ENCODE measurements at regions of chr2 and their contacts with region 1.

Region 1: GRCh38 chr2:148989882-148990493 is 48.5 kb upstream of the LYPD6B start:
- DNase-seq: peak; percentile 72
- H3K4me3 Mint-ChIP-seq: no peak overlapping the region
- H3K27ac Mint-ChIP-seq: no peak overlapping the region
- H3K4me1 Mint-ChIP-seq: peaks cover 3% of the 10 kb centered on the region
- H3K27me3 Mint-ChIP-seq: no peaks in the 10 kb centered on the region

Region 2: DNA sequence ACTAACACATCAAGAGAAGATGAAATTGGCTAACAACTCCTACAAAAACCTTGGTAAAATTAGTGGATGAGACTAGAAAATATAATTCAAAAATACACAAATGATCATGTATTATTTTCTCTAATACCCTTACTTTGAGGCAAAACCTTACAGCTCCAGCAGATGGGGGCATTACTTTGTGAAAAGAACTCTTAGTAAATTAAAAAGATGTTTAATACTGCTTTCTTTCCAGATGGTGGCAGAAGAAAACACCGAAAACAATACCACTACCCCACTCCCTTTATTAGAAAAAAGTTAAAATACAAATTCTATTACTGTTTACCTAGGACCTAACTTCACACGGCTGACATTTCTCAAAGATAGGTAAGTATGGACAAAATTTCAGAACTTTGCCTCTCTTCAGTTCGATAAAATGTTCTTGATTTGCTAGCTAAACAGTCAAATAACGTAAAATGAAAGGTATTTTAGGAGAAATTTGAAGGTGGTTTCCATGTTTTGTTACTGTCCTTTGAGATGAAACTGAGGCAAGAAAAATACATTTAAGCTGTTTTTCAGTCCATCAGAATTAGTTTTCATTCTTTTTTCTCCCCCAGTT is 1000.1 kb before region 1 on chr2:
- CTCF ChIA-PET with region 1: interaction called, 11 read pairs
- DNase-seq: peak; percentile 43
- H3K4me3 Mint-ChIP-seq: no peak overlapping the region
- H3K27ac Mint-ChIP-seq: no peak overlapping the region
- H3K4me1 Mint-ChIP-seq: no peaks in the 10 kb centered on the region
- H3K27me3 Mint-ChIP-seq: no peaks in the 10 kb centered on the region

Region 3: GRCh38 chr2:149000158-149000938 is 10.4 kb after region 1 on chr2:
- CTCF ChIA-PET with region 1: no interaction called
- DNase-seq: no peak
- H3K4me3 Mint-ChIP-seq: no peak overlapping the region
- H3K27ac Mint-ChIP-seq: no peak overlapping the region
- H3K4me1 Mint-ChIP-seq: no peaks in the 10 kb centered on the region
- H3K27me3 Mint-ChIP-seq: no peaks in the 10 kb centered on the region

Measured in activated naive CD4-positive, alpha-beta T cell treated with anti-CD3 and anti-CD28 coated beads, Interleukin-2, amount 10 ng/mL, durations not matched to agents 7 days and 5 days (primary cell).